ENCODE measurements at regions of chr7 and their contacts with region 1.

Region 1: DNA sequence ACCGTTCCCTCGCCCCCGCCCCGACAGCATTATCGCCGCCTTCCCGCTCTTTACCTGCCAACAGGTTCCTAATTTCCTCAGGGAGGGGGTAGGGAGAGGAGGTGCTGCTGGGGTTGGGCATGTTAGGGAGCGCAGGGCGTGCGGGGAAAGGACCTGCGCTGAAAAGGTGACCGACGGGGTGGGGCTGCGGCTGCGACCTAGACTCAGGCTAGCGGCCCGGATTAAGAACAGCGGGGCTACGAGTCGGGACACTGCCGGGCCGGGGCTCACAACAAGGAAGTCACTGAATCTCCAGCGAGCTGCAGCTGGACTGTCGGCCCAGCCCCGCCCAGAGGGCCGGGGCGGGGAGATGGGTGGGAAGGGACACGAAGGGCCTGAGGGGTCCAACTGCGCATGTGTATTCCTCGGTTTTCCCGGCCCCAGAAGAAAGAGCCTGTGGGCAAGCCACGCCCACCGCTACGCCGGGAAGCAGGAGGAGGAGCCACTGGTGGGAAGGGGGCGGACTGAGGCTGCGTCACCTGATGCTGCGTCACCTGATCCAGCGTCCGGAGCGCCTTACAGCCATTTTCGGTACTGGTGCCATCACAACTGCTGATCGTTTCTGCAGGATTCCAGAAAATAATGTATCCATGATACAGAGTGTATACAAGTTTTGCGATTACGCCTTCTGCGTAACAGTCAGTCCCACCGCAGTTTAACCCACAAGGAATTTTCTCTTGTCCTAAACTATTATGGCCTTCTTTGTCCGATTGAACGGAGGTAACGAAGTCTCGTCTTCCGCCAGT is at the start of gene SKAP2:
- DNase-seq: peak; percentile 97
- ATAC-seq: peak; percentile 85
- H3K4me3 ChIP-seq: peak within 1 kb of the TSS; percentile 73 to 95 (median 90)
- H3K4me3 Mint-ChIP-seq: peak within 1 kb of the TSS; percentile 100
- H3K27ac ChIP-seq: peak within 1 kb of the TSS; percentile 95
- H3K27ac Mint-ChIP-seq: peak within 1 kb of the TSS; percentile 98
- H3K4me1 ChIP-seq: peaks cover 0 to 23% of the 10 kb centered on the region in 2 donors
- H3K4me1 Mint-ChIP-seq: peaks cover 41% of the 10 kb centered on the region
- H3K27me3 ChIP-seq: no peaks in the 10 kb centered on the region
- H3K27me3 Mint-ChIP-seq: no peaks in the 10 kb centered on the region
- CTCF ChIP-seq: no peak
- total RNA-seq, gene SKAP2: 53.4 and 58.4 TPM in 2 replicates

Region 2: DNA sequence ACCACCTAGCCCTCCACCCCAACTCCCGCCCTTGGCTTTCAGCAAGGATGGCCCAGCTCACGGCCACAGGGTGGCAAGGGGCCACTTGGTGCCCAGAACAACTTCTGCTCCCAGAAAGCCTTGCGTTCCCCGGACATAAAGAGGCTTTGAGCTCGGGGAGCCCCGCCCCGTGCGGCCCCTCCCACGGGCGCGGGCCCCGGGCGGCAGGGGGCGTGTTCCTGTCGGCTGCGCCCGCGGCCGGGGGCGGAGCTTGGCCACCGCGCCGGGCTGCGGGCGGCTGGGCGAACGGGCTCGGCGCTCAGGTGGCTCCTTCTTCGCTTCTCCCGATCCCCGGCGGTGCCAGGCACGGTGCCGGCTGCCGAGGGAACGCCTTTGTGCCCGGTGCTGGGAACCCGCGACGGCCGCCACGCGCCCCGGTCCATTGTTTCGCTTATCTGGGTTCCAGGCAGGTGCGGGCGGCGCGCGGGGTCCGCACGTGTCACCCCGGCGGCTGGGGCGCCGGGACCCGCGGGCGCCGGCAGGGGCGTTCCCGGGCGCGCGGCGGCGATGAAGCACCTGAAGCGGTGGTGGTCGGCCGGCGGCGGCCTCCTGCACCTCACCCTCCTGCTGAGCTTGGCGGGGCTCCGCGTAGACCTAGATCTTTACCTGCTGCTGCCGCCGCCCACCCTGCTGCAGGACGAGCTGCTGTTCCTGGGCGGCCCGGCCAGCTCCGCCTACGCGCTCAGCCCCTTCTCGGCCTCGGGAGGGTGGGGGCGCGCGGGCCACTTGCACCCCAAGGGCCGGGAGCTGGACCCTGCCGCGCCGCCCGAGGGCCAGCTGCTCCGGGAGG is 712.3 kb before region 1 on chr7 and contains the start of gene NFE2L3:
- CTCF ChIA-PET with region 1: no interaction called
- POLR2A ChIA-PET with region 1: interaction called, 7 read pairs
- intact Hi-C with region 1: loop called (anchors 2 kb)
- DNase-seq: peak; percentile 89
- ATAC-seq: peak; percentile 89
- H3K4me3 ChIP-seq: peak within 1 kb of the TSS; percentile 35 to 90 (median 62)
- H3K4me3 Mint-ChIP-seq: peak within 1 kb of the TSS; percentile 97
- H3K27ac ChIP-seq: peak within 1 kb of the TSS; percentile 16 to 65
- H3K27ac Mint-ChIP-seq: peak within 1 kb of the TSS; percentile 88
- H3K4me1 ChIP-seq: peaks cover 34 to 42% of the 10 kb centered on the region in 2 donors
- H3K4me1 Mint-ChIP-seq: peaks cover 48% of the 10 kb centered on the region
- H3K27me3 ChIP-seq: no peaks in the 10 kb centered on the region
- H3K27me3 Mint-ChIP-seq: no peaks in the 10 kb centered on the region
- CTCF ChIP-seq: no peak
- total RNA-seq, gene NFE2L3: 1.6 and 4.5 TPM in 2 replicates

Region 3: GRCh38 chr7:26398756-26399501 is 465.6 kb before region 1 on chr7:
- CTCF ChIA-PET with region 1: no interaction called
- POLR2A ChIA-PET with region 1: no interaction called
- intact Hi-C with region 1: loop called (anchors 2 kb)
- DNase-seq: peak; percentile 95
- ATAC-seq: peak; percentile 86
- H3K4me3 ChIP-seq: peak overlapping the region in 4 of 5 experiments; percentile 50 to 70 (median 64)
- H3K4me3 Mint-ChIP-seq: peak overlapping the region; percentile 99
- H3K27ac ChIP-seq: peak overlapping the region; percentile 79 to 81
- H3K27ac Mint-ChIP-seq: peak overlapping the region; percentile 100
- H3K4me1 ChIP-seq: peaks cover 20 to 28% of the 10 kb centered on the region in 2 donors
- H3K4me1 Mint-ChIP-seq: peaks cover 32% of the 10 kb centered on the region
- H3K27me3 ChIP-seq: peaks cover 0 to 8% (median 0%) of the 10 kb centered on the region in 4 experiments
- H3K27me3 Mint-ChIP-seq: peaks cover 3% of the 10 kb centered on the region
- CTCF ChIP-seq: no peak

Region 4: DNA sequence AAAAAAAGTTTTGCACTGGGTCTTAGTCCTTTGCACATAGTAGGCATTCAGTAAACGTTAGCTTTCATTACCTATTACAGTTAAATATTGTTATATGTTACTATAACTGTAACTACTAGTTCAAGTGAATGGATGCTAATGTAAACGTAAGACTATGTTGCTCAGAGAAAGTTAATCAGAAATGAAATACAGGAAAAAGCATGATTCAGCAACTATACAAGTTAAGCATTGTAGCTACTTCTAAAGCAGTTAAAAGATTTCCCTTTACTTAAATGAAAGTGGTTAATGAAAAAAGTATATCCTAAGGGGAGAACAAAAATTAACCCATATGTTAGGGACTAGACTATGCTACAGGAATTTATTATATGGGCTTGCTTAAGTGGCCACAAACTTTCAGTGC is 121.3 kb before region 1 on chr7:
- CTCF ChIA-PET with region 1: no interaction called
- POLR2A ChIA-PET with region 1: no interaction called
- intact Hi-C with region 1: no loop called
- DNase-seq: no peak
- ATAC-seq: no peak
- H3K4me3 ChIP-seq: no peak overlapping the region
- H3K4me3 Mint-ChIP-seq: no peak overlapping the region
- H3K27ac ChIP-seq: no peak overlapping the region
- H3K27ac Mint-ChIP-seq: no peak overlapping the region
- H3K4me1 ChIP-seq: no peaks in the 10 kb centered on the region
- H3K4me1 Mint-ChIP-seq: no peaks in the 10 kb centered on the region
- H3K27me3 ChIP-seq: no peaks in the 10 kb centered on the region
- H3K27me3 Mint-ChIP-seq: no peaks in the 10 kb centered on the region
- CTCF ChIP-seq: no peak

Region 5: DNA sequence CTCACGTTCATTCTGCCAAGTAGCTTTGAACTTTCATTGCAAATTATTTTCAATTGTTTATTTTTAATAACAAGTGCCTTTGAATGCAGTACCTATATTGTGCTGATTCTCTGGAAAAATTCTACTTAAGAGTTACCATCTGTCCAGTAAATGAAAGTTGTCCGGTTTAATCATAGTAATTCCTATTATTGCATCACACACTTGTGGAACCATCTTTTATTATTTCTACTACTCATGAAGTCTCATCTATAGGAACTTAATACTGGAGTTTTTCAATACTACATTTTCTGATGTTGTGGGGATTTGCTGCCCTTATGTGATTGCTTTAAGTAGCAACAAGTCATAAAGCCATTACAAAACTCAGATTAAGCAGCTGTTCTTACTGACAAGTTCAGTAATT is 16.4 kb after region 1 on chr7:
- CTCF ChIA-PET with region 1: no interaction called
- POLR2A ChIA-PET with region 1: no interaction called
- intact Hi-C with region 1: no loop called
- DNase-seq: no peak
- ATAC-seq: no peak
- H3K4me3 ChIP-seq: no peak overlapping the region
- H3K4me3 Mint-ChIP-seq: no peak overlapping the region
- H3K27ac ChIP-seq: no peak overlapping the region
- H3K27ac Mint-ChIP-seq: no peak overlapping the region
- H3K4me1 ChIP-seq: no peaks in the 10 kb centered on the region
- H3K4me1 Mint-ChIP-seq: no peaks in the 10 kb centered on the region
- H3K27me3 ChIP-seq: peaks cover 0 to 4% (median 0%) of the 10 kb centered on the region in 4 experiments
- H3K27me3 Mint-ChIP-seq: peaks cover 7% of the 10 kb centered on the region
- CTCF ChIP-seq: no peak

Region 6: DNA sequence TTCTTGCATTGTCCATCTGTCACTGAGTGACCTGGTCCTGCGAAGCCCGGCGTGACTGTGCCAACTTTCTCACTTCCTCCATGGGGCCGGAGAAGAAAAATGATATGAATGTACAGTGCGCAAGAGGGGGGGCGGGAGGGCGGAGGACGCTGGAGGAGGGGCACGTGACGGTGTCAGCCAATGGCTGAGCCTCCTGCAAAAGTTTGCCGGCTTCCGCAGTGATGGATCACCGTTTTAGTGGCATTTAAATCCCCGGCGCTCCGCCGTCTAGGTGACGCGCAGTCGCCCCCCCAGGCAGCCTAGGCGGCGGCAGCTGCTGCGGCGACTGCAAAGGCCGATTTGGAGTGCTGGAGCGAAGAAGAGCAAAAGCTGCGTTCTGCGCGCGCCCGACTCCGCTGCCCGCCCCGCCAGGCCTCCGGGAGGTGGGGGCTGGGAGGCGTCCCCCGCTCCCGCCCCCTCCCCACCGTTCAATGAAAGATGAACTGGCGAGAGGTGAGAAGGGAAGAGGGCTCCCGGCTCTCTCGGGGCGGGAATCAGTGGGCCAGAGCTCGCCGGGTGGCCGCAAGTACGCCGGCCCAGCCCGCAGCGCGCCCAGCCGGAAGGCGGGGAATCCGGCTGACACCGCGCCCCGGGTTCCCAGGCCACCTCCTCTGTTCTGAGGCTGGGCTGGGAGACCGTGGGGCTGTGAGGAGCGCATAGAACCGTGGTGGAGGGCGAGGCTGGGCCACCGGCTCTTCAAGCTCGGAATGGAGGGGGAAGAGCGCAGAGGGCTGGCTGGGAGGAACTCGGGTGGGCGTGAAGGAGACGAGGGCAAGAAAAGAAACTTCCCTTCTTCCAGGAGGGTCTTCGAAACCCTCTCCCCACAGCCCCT is 231.6 kb after region 1 on chr7 and contains the start of gene HOXA1:
- CTCF ChIA-PET with region 1: interaction called, 7 read pairs
- POLR2A ChIA-PET with region 1: no interaction called
- intact Hi-C with region 1: loop called (anchors 2 kb)
- DNase-seq: peak; percentile 84
- ATAC-seq: peak; percentile 82
- H3K4me3 ChIP-seq: peak within 1 kb of the TSS; percentile 68 to 91 (median 79)
- H3K4me3 Mint-ChIP-seq: peak within 1 kb of the TSS; percentile 88
- H3K27ac ChIP-seq: peak within 1 kb of the TSS; percentile 2 to 53
- H3K27ac Mint-ChIP-seq: peak within 1 kb of the TSS; percentile 73
- H3K4me1 ChIP-seq: peaks cover 32 to 37% of the 10 kb centered on the region in 2 donors
- H3K4me1 Mint-ChIP-seq: peaks cover 32% of the 10 kb centered on the region
- H3K27me3 ChIP-seq: peaks cover 2 to 79% (median 46%) of the 10 kb centered on the region in 4 experiments
- H3K27me3 Mint-ChIP-seq: peaks cover 59% of the 10 kb centered on the region
- CTCF ChIP-seq: no peak
- total RNA-seq, gene HOXA1: 0.37 and 0.87 TPM in 2 replicates

Region 7: GRCh38 chr7:27662490-27663205 is 798.1 kb after region 1 on chr7 and contains the start of gene HIBADH:
- CTCF ChIA-PET with region 1: no interaction called
- POLR2A ChIA-PET with region 1: no interaction called
- intact Hi-C with region 1: loop called (anchors 5 kb)
- DNase-seq: peak; percentile 98
- ATAC-seq: peak; percentile 95
- H3K4me3 ChIP-seq: peak within 1 kb of the TSS; percentile 76 to 97 (median 83)
- H3K4me3 Mint-ChIP-seq: peak within 1 kb of the TSS; percentile 88
- H3K27ac ChIP-seq: peak within 1 kb of the TSS; percentile 55 to 74
- H3K27ac Mint-ChIP-seq: peak within 1 kb of the TSS; percentile 92
- H3K4me1 ChIP-seq: peaks cover 10 to 12% of the 10 kb centered on the region in 2 donors
- H3K4me1 Mint-ChIP-seq: peaks cover 6% of the 10 kb centered on the region
- H3K27me3 ChIP-seq: no peaks in the 10 kb centered on the region
- H3K27me3 Mint-ChIP-seq: no peaks in the 10 kb centered on the region
- CTCF ChIP-seq: peak; percentile 15
- total RNA-seq, gene HIBADH: 14.1 and 15.0 TPM in 2 replicates

Measured in B cell (primary cell).